ENCODE measurements at regions of chr4 and their contacts with region 1.

Region 1: DNA sequence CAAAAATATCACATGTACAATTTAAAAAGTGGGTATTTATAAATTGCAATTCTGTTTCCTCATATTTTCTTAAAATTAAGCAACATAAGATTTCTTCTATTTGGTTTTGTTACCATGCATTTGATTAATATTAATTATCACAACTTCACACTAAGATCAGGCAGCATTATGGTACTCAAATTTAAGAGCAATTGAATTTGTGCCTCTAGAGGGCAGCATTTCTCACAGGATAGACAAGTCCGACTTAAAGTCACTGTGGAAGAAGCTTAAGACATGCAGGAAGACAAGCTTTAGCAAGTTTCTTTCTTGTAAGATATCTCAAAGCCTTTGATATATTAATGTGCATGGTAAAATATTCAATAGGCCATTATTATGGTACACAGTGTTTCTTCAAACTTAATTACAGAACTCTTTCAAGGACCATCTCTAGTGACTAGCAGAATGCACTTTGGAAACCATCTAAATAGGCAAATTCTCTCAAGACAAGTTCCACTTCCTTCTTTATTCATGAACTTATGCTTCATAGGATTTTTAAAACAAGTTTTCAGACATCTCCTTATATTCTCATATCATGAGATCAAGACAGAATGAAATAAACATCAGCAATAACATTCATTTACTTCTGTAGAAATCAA is 35.0 kb downstream of the FBXW7 start:
- DNase-seq: peak in 7 of 9 donors; percentile 70 to 85 (median 79)
- ATAC-seq: peak; percentile 90
- H3K4me3 ChIP-seq: no peak overlapping the region
- H3K4me3 Mint-ChIP-seq: no peak overlapping the region
- H3K27ac ChIP-seq: no peak overlapping the region
- H3K27ac Mint-ChIP-seq: peak overlapping the region in 4 of 9 donors; percentile 56 to 87 (median 68)
- H3K4me1 ChIP-seq: no peaks in the 10 kb centered on the region
- H3K4me1 Mint-ChIP-seq: peaks cover 20 to 53% (median 41%) of the 10 kb centered on the region in 7 donors
- H3K27me3 ChIP-seq: no peaks in the 10 kb centered on the region
- H3K27me3 Mint-ChIP-seq: no peaks in the 10 kb centered on the region

Region 2: GRCh38 chr4:152408514-152409327 is 92.2 kb before region 1 on chr4:
- CTCF ChIA-PET with region 1: interaction called, 5 read pairs
- POLR2A ChIA-PET with region 1: no interaction called
- intact Hi-C with region 1: loop called in 1 of 2 experiments (anchors 2 kb)
- DNase-seq: peak in 6 of 9 donors; percentile 7 to 29 (median 21)
- ATAC-seq: peak; percentile 77
- H3K4me3 ChIP-seq: no peak overlapping the region
- H3K4me3 Mint-ChIP-seq: no peak overlapping the region
- H3K27ac ChIP-seq: no peak overlapping the region
- H3K27ac Mint-ChIP-seq: no peak overlapping the region
- H3K4me1 ChIP-seq: no peaks in the 10 kb centered on the region
- H3K4me1 Mint-ChIP-seq: peaks cover 2 to 20% (median 11%) of the 10 kb centered on the region in 7 donors
- H3K27me3 ChIP-seq: no peaks in the 10 kb centered on the region
- H3K27me3 Mint-ChIP-seq: no peaks in the 10 kb centered on the region

Region 3: GRCh38 chr4:152485726-152486276 is 15.1 kb before region 1 on chr4:
- CTCF ChIA-PET with region 1: interaction called, 5 read pairs
- POLR2A ChIA-PET with region 1: interaction called, 4 read pairs
- intact Hi-C with region 1: loop called in 1 of 2 experiments (anchors 1 kb)
- DNase-seq: peak in 7 of 9 donors; percentile 10 to 49 (median 35)
- ATAC-seq: peak; percentile 97
- H3K4me3 ChIP-seq: no peak overlapping the region
- H3K4me3 Mint-ChIP-seq: peak overlapping the region in 2 of 10 donors; percentile 10 to 74
- H3K27ac ChIP-seq: no peak overlapping the region
- H3K27ac Mint-ChIP-seq: peak overlapping the region in 3 of 9 donors; percentile 30 to 79 (median 40)
- H3K4me1 ChIP-seq: peaks cover 0 to 13% of the 10 kb centered on the region in 2 donors
- H3K4me1 Mint-ChIP-seq: peaks cover 30 to 56% (median 45%) of the 10 kb centered on the region in 7 donors
- H3K27me3 ChIP-seq: no peaks in the 10 kb centered on the region
- H3K27me3 Mint-ChIP-seq: no peaks in the 10 kb centered on the region

Region 4: GRCh38 chr4:152640058-152640833 is 139.3 kb after region 1 on chr4:
- CTCF ChIA-PET with region 1: interaction called, 167 read pairs
- POLR2A ChIA-PET with region 1: interaction called, 4 read pairs
- intact Hi-C with region 1: loop called (anchors 1 kb)
- DNase-seq: peak in 6 of 9 donors; percentile 14 to 51 (median 34)
- ATAC-seq: no peak
- H3K4me3 ChIP-seq: no peak overlapping the region
- H3K4me3 Mint-ChIP-seq: no peak overlapping the region
- H3K27ac ChIP-seq: no peak overlapping the region
- H3K27ac Mint-ChIP-seq: peak overlapping the region in 3 of 9 donors; percentile 2 to 63 (median 20)
- H3K4me1 ChIP-seq: peaks cover 0 to 15% of the 10 kb centered on the region in 2 donors
- H3K4me1 Mint-ChIP-seq: peaks cover 0 to 31% (median 9%) of the 10 kb centered on the region in 7 donors
- H3K27me3 ChIP-seq: no peaks in the 10 kb centered on the region
- H3K27me3 Mint-ChIP-seq: no peaks in the 10 kb centered on the region

Region 5: DNA sequence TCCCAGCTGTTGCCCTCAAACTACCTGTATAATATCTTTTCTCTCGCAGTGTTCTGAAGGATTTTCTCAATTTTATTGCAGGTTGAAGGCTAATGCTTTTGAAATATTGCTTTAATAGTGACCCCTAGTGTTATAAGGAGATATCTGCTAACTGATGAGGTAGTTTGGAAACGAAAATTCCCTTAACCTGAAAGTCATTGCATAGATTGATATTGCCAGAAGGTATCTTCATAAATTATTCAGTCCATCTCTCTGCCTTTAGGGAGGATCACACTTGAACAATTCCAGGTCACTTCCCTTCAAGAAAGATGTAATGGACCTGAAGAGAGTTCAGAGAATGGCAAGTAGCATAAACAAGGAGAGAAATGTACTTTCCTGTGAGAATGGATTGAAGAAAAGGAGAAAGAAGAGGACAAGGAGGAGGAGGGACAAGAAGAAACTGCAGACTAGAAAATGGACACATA is 234.5 kb after region 1 on chr4:
- CTCF ChIA-PET with region 1: interaction called, 10 read pairs
- POLR2A ChIA-PET with region 1: interaction called, 3 read pairs
- intact Hi-C with region 1: loop called (anchors 1 kb)
- DNase-seq: peak in 6 of 9 donors; percentile 2 to 33 (median 26)
- ATAC-seq: peak; percentile 49
- H3K4me3 ChIP-seq: no peak overlapping the region
- H3K4me3 Mint-ChIP-seq: no peak overlapping the region
- H3K27ac ChIP-seq: no peak overlapping the region
- H3K27ac Mint-ChIP-seq: no peak overlapping the region
- H3K4me1 ChIP-seq: no peaks in the 10 kb centered on the region
- H3K4me1 Mint-ChIP-seq: peaks cover 0 to 7% (median 0%) of the 10 kb centered on the region in 7 donors
- H3K27me3 ChIP-seq: no peaks in the 10 kb centered on the region
- H3K27me3 Mint-ChIP-seq: peaks cover 0 to 6% (median 4%) of the 10 kb centered on the region in 5 donors